GM12878 (cell line): ENCODE measurements at regions of chr3 and their contacts with region 1.

Region 1: GRCh38 chr3:8223766-8224165 is 277.9 kb upstream of the LMCD1 start:
- DNase-seq: no peak
- ATAC-seq: no peak
- H3K4me3 ChIP-seq: no peak overlapping the region
- H3K27ac ChIP-seq: no peak overlapping the region
- H3K4me1 ChIP-seq: no peaks in the 10 kb centered on the region
- H3K27me3 ChIP-seq: no peaks in the 10 kb centered on the region
- CTCF ChIP-seq: no peak
- EP300 ChIP-seq: no peak
- POLR2A ChIP-seq: no peak
- RAD21 ChIP-seq: no peak

Region 2: GRCh38 chr3:8197384-8197783 is 26.4 kb before region 1 on chr3:
- CTCF ChIA-PET with region 1: no interaction called
- POLR2A ChIA-PET with region 1: no interaction called
- RAD21 ChIA-PET with region 1: no interaction called
- SMC1A ChIA-PET with region 1: no interaction called
- in situ Hi-C with region 1: no loop called
- intact Hi-C with region 1: no loop called
- DNase-seq: no peak
- ATAC-seq: no peak
- H3K4me3 ChIP-seq: no peak overlapping the region
- H3K27ac ChIP-seq: no peak overlapping the region
- H3K4me1 ChIP-seq: no peaks in the 10 kb centered on the region
- H3K27me3 ChIP-seq: no peaks in the 10 kb centered on the region
- CTCF ChIP-seq: no peak
- EP300 ChIP-seq: no peak
- POLR2A ChIP-seq: no peak
- RAD21 ChIP-seq: no peak

Region 3: GRCh38 chr3:8239718-8240695 is 16.2 kb after region 1 on chr3:
- CTCF ChIA-PET with region 1: interaction called, 34 read pairs
- POLR2A ChIA-PET with region 1: interaction called, 3 read pairs
- RAD21 ChIA-PET with region 1: no interaction called
- SMC1A ChIA-PET with region 1: interaction called, 3 read pairs
- in situ Hi-C with region 1: no loop called
- intact Hi-C with region 1: no loop called
- DNase-seq: no peak
- ATAC-seq: peak; percentile 89
- H3K4me3 ChIP-seq: no peak overlapping the region
- H3K27ac ChIP-seq: no peak overlapping the region
- H3K4me1 ChIP-seq: no peaks in the 10 kb centered on the region
- H3K27me3 ChIP-seq: no peaks in the 10 kb centered on the region
- CTCF ChIP-seq: peak; percentile 72 to 91 (median 89)
- EP300 ChIP-seq: no peak
- POLR2A ChIP-seq: no peak
- RAD21 ChIP-seq: peak; percentile 63

Region 4: DNA sequence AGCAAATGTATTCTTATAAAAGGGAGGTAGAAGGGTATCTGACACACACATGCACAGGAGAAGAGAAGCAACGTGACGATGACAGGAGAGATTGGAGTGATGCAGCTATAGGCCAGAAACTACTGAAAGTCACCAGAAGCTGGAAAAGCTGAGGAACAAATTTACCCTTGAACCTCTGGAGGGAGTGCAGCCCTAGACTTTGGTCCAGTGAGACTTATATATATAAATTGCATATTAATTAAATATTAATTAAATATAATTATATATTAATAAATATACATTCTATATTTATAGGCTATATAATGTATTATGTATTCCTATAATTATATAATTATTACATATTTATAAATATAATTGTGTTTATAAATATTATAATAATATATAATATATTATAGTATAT is 181.4 kb after region 1 on chr3:
- CTCF ChIA-PET with region 1: no interaction called
- POLR2A ChIA-PET with region 1: no interaction called
- RAD21 ChIA-PET with region 1: no interaction called
- SMC1A ChIA-PET with region 1: no interaction called
- in situ Hi-C with region 1: no loop called
- intact Hi-C with region 1: no loop called
- DNase-seq: no peak
- ATAC-seq: no peak
- H3K4me3 ChIP-seq: no peak overlapping the region
- H3K27ac ChIP-seq: no peak overlapping the region
- H3K4me1 ChIP-seq: no peaks in the 10 kb centered on the region
- H3K27me3 ChIP-seq: no peaks in the 10 kb centered on the region; a peak in 1 of 4 replicates
- CTCF ChIP-seq: no peak
- EP300 ChIP-seq: no peak
- POLR2A ChIP-seq: no peak
- RAD21 ChIP-seq: no peak